CD8-positive, alpha-beta T cell (primary cell): ENCODE measurements at regions of chr3 and their contacts with region 1.

Region 1: DNA sequence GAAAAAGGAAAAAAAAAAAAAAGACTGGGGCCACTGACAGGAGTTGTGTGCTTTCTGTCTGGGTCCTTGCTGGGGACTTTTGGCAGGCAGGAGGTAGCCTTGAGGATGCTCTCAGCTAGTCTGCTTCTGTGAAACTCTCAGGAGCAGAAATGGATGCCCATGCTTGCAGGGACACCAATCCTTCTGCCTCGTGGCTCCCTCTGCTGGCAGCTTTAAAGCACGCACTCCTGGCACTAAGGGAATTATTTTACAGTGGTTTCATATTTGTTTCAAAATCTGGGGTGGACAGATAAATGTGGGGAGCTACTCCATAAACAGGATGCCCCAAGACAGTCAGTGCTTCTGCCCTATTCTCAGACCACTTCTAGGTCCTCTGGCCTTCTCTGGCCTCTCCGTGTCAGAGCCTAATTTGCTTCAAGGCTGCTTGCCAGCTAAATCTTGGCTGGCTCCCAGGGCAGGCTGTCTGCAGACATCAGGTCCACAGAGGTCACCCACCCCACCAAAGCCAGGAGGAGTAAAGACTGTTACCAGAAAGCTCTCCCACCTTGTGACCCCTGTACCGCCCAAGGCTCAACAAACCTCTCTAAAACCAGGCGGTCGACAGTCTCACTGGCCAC is 17.1 kb downstream of the TRAIP start:
- DNase-seq: peak; percentile 63 to 89 (median 85)
- ATAC-seq: peak; percentile 98
- H3K4me3 ChIP-seq: no peak overlapping the region
- H3K4me3 Mint-ChIP-seq: no peak overlapping the region
- H3K27ac ChIP-seq: no peak overlapping the region
- H3K27ac Mint-ChIP-seq: no peak overlapping the region
- H3K4me1 ChIP-seq: no peaks in the 10 kb centered on the region
- H3K4me1 Mint-ChIP-seq: peaks cover 2% of the 10 kb centered on the region
- H3K27me3 ChIP-seq: no peaks in the 10 kb centered on the region
- H3K27me3 Mint-ChIP-seq: no peaks in the 10 kb centered on the region
- CTCF ChIP-seq: peak; percentile 73

Region 2: GRCh38 chr3:49703443-49703927 is 135.8 kb before region 1 on chr3:
- CTCF ChIA-PET with region 1: interaction called, 46 read pairs
- POLR2A ChIA-PET with region 1: no interaction called
- intact Hi-C with region 1: loop called in 1 of 2 experiments (anchors 1 kb)
- DNase-seq: peak; percentile 39 to 81 (median 67)
- ATAC-seq: peak; percentile 100
- H3K4me3 ChIP-seq: no peak overlapping the region
- H3K4me3 Mint-ChIP-seq: no peak overlapping the region
- H3K27ac ChIP-seq: no peak overlapping the region
- H3K27ac Mint-ChIP-seq: no peak overlapping the region
- H3K4me1 ChIP-seq: no peaks in the 10 kb centered on the region
- H3K4me1 Mint-ChIP-seq: no peaks in the 10 kb centered on the region
- H3K27me3 ChIP-seq: no peaks in the 10 kb centered on the region
- H3K27me3 Mint-ChIP-seq: no peaks in the 10 kb centered on the region
- CTCF ChIP-seq: peak; percentile 74

Region 3: GRCh38 chr3:49786241-49786958 is 52.9 kb before region 1 on chr3 and contains the start of gene IP6K1:
- CTCF ChIA-PET with region 1: interaction called, 17 read pairs
- POLR2A ChIA-PET with region 1: interaction called, 3 read pairs
- intact Hi-C with region 1: loop called in 1 of 2 experiments (anchors 10 kb)
- DNase-seq: peak; percentile 98 to 100 (median 99)
- ATAC-seq: peak; percentile 98
- H3K4me3 ChIP-seq: peak within 1 kb of the TSS; percentile 86 to 87
- H3K4me3 Mint-ChIP-seq: peak within 1 kb of the TSS; percentile 95
- H3K27ac ChIP-seq: peak within 1 kb of the TSS; percentile 87 to 94
- H3K27ac Mint-ChIP-seq: peak within 1 kb of the TSS; percentile 99
- H3K4me1 ChIP-seq: peaks cover 29% of the 10 kb centered on the region
- H3K4me1 Mint-ChIP-seq: peaks cover 40% of the 10 kb centered on the region
- H3K27me3 ChIP-seq: no peaks in the 10 kb centered on the region
- H3K27me3 Mint-ChIP-seq: no peaks in the 10 kb centered on the region
- CTCF ChIP-seq: no peak
- total RNA-seq, gene IP6K1: 34.3 to 36.6 TPM

Region 4: GRCh38 chr3:49802719-49803464 is 36.4 kb before region 1 on chr3 and contains the start of gene INKA1:
- CTCF ChIA-PET with region 1: interaction called, 416 read pairs
- POLR2A ChIA-PET with region 1: interaction called, 76 read pairs
- intact Hi-C with region 1: loop called in 1 of 2 experiments (anchors 1 kb)
- DNase-seq: peak; percentile 77 to 94 (median 90)
- ATAC-seq: peak; percentile 83
- H3K4me3 ChIP-seq: peak within 1 kb of the TSS; percentile 98 to 99
- H3K4me3 Mint-ChIP-seq: peak within 1 kb of the TSS; percentile 94
- H3K27ac ChIP-seq: peak within 1 kb of the TSS; percentile 86 to 88
- H3K27ac Mint-ChIP-seq: peak within 1 kb of the TSS; percentile 92
- H3K4me1 ChIP-seq: peaks cover 43% of the 10 kb centered on the region
- H3K4me1 Mint-ChIP-seq: peaks cover 45% of the 10 kb centered on the region
- H3K27me3 ChIP-seq: no peaks in the 10 kb centered on the region
- H3K27me3 Mint-ChIP-seq: no peaks in the 10 kb centered on the region
- CTCF ChIP-seq: peak; percentile 75
- total RNA-seq, gene INKA1: 0.71 to 1.00 TPM

Region 5: DNA sequence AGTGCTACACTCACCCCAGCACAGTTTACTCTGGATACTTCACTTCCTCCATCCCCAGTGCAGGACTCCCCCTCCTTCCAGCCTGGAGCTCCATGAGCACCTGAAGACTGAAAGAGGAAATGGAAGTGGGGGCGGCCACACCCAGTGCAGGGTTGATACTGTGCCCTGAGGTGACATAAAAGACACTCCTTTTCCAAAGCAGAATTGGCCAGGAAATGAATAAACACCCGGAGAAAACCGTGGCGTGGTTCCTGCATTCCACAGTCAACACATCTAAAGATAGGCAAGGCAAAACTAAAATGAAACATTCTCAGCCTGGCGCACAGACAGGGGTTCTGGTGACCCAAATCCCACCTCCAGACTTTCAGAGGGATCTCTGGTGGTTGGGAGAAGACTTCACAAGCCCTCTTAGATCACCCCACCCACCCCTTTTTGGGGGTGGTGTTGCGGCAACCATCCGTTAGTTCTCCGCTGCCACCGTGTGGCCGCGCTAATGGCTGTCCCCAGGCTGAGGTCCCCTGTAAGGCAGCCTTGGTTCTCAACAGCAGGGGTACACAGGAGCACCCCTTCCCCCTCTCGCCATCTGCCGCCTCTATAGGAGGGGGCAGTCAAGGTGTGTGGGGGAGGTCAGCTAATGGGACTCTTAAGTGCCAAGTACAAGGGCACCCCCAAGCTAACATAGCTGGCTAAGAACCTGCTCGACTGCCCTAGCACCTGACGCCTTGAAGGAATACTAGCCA is 66.9 kb after region 1 on chr3:
- CTCF ChIA-PET with region 1: interaction called, 5 read pairs
- POLR2A ChIA-PET with region 1: no interaction called
- intact Hi-C with region 1: loop called in 1 of 2 experiments (anchors 2 kb)
- DNase-seq: peak; percentile 10 to 69 (median 48)
- ATAC-seq: peak; percentile 43
- H3K4me3 ChIP-seq: no peak overlapping the region
- H3K4me3 Mint-ChIP-seq: peak overlapping the region; percentile 37
- H3K27ac ChIP-seq: no peak overlapping the region
- H3K27ac Mint-ChIP-seq: peak overlapping the region; percentile 37
- H3K4me1 ChIP-seq: peaks cover 22% of the 10 kb centered on the region
- H3K4me1 Mint-ChIP-seq: peaks cover 29% of the 10 kb centered on the region
- H3K27me3 ChIP-seq: no peaks in the 10 kb centered on the region
- H3K27me3 Mint-ChIP-seq: no peaks in the 10 kb centered on the region
- CTCF ChIP-seq: peak; percentile 54